K562 (cell line): ENCODE measurements at regions of chr12 and their contacts with region 1.

Region 1: GRCh38 chr12:23731035-23731434 is 218.4 kb downstream of the SOX5 start:
- DNase-seq: peak in 1 of 4 experiments; percentile 33
- ATAC-seq: peak; percentile 51
- H3K4me3 ChIP-seq: no peak overlapping the region
- H3K27ac ChIP-seq: peak overlapping the region; percentile 57
- H3K4me1 ChIP-seq: peaks cover 3 to 28% of the 10 kb centered on the region in 2 experiments; a peak in 4 of 5 replicates
- H3K27me3 ChIP-seq: no peaks in the 10 kb centered on the region
- CTCF ChIP-seq: no peak
- EP300 ChIP-seq: no peak
- POLR2A ChIP-seq: no peak
- RAD21 ChIP-seq: no peak

Region 2: DNA sequence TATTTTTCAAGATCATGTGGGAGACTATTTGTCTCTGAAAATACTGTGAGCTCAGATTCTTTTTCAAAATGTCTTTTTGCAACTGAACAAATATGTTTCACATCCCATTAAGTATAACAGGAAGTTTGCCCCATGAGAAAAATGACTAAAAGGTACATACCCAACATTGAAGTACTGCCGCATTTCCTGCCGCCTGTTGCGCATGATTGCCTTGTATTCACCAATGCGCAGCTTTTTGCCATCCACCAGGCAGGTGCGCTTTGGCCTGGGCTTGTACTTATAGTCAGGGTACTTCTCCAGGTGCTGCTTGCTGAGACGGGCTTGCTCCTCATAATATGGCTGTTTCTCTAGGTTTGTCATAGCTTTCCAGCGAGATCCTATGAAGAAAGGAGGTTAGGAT is 194.7 kb before region 1 on chr12:
- CTCF ChIA-PET with region 1: no interaction called
- POLR2A ChIA-PET with region 1: no interaction called
- in situ Hi-C with region 1: no loop called
- intact Hi-C with region 1: no loop called
- DNase-seq: no peak
- ATAC-seq: no peak
- H3K4me3 ChIP-seq: no peak overlapping the region
- H3K27ac ChIP-seq: no peak overlapping the region
- H3K4me1 ChIP-seq: peaks cover 0 to 6% of the 10 kb centered on the region in 2 experiments; a peak in 2 of 5 replicates
- H3K27me3 ChIP-seq: no peaks in the 10 kb centered on the region
- CTCF ChIP-seq: no peak
- EP300 ChIP-seq: no peak
- POLR2A ChIP-seq: no peak
- RAD21 ChIP-seq: no peak

Region 3: DNA sequence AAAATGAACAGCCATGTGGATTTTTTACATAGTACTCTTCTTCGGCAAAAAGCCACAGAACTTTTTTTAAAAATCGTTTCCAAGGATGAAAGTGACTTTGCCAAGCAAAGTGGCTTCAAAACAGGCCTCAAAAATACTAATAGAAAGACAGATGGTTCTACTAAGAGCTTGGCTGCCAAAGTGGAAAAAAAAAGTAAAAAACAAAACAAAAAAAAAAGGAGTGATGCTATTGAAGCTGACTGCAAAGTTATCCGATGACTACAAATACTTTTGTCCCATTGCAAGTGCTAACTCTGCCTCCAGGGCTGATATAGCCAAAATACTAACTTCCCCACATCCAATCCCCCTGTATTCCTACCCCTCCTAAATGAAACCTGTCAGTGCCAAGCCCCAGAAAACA is 59.2 kb before region 1 on chr12:
- CTCF ChIA-PET with region 1: no interaction called
- POLR2A ChIA-PET with region 1: no interaction called
- in situ Hi-C with region 1: no loop called
- intact Hi-C with region 1: loop called (anchors 10 kb)
- DNase-seq: no peak
- ATAC-seq: peak; percentile 25; the same call in 1 of the 3 replicates
- H3K4me3 ChIP-seq: no peak overlapping the region
- H3K27ac ChIP-seq: no peak overlapping the region
- H3K4me1 ChIP-seq: no peaks in the 10 kb centered on the region; a peak in 1 of 5 replicates
- H3K27me3 ChIP-seq: no peaks in the 10 kb centered on the region
- CTCF ChIP-seq: no peak
- EP300 ChIP-seq: no peak
- POLR2A ChIP-seq: no peak
- RAD21 ChIP-seq: no peak